ENCODE measurements at regions of chr3 and their contacts with region 1.

Region 1: DNA sequence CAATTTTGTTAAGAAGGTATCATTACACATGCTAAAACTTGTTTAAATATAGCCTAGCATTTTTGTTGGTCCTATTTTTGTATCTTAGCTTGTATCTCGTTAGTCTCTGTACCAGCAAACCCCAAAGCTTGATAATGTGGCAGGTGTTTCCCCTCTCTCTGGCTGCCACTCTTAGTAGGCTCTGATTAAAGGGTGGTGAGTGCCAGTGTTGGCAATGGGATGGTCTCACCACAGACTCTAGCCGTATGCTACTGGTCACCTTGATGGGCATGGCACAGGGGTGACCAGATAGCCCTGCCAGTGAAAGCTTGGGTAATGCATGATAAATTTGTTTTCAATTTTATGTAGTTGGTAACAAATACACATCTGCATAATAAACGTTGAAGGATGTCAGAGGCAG is 188.3 kb downstream of the CFAP20DC start:
- DNase-seq: no peak
- ATAC-seq: peak; percentile 54; the same call in 2 of the 3 replicates
- H3K4me3 ChIP-seq: no peak overlapping the region
- H3K27ac ChIP-seq: no peak overlapping the region
- H3K4me1 ChIP-seq: no peaks in the 10 kb centered on the region
- H3K27me3 ChIP-seq: no peaks in the 10 kb centered on the region
- CTCF ChIP-seq: no peak
- EP300 ChIP-seq: no peak
- POLR2A ChIP-seq: no peak
- RAD21 ChIP-seq: no peak

Region 2: DNA sequence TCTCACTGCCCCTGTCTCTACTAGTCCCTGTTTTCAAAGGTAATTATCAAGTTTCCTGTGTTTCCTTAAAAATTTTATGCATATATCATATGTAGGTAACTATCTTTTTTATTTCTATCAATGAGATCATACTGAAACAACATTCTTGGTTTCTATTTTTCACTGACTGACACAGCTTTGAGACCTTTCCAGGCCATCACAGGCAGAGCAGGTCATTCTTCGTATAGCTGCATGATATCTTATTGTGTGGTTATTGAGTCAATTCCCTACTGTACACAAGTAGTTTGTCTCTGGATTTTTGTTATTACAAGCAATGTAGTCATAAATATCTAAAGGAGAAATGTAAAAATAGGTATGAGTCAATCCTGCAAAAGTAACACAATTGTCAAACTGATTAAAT is 18.6 kb after region 1 on chr3:
- CTCF ChIA-PET with region 1: interaction called, 13 read pairs
- POLR2A ChIA-PET with region 1: interaction called, 3 read pairs
- RAD21 ChIA-PET with region 1: interaction called, 3 read pairs
- SMC1A ChIA-PET with region 1: interaction called, 7 read pairs
- in situ Hi-C with region 1: no loop called
- intact Hi-C with region 1: no loop called
- DNase-seq: no peak
- ATAC-seq: peak; percentile 94
- H3K4me3 ChIP-seq: no peak overlapping the region
- H3K27ac ChIP-seq: no peak overlapping the region
- H3K4me1 ChIP-seq: no peaks in the 10 kb centered on the region
- H3K27me3 ChIP-seq: no peaks in the 10 kb centered on the region
- CTCF ChIP-seq: no peak
- EP300 ChIP-seq: no peak
- POLR2A ChIP-seq: no peak
- RAD21 ChIP-seq: no peak

Region 3: DNA sequence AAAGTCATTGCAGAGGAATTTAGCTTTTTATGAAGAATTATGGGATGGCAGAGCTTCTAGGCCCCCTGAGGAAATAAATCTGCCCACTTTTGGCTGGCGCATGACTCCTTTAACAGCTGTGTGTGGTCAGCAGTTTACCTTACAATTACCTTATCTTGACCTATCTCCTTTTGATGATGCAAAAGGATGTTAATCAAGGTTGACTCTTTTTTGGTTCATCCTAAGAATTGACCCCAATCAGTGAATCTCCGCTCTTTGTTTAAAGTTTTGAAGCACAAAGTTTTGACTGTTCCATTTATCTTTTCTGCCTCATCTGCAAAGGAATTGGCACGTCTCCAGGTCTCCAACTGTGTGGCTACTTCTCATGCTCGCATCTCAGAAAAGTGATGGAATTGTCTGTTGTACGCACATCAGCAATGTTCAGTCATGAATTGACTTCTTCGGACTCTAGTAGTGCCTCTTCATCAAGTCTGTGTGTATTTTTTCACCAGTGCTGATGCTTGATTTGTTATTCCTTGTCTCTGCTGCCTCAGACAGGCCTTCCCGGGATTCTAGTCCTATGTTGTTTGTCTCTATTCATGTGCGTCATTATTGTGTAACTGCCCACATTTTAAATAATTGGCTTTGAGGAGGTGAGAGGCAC is 384.4 kb after region 1 on chr3:
- CTCF ChIA-PET with region 1: no interaction called
- POLR2A ChIA-PET with region 1: no interaction called
- RAD21 ChIA-PET with region 1: no interaction called
- SMC1A ChIA-PET with region 1: no interaction called
- in situ Hi-C with region 1: no loop called
- intact Hi-C with region 1: no loop called
- DNase-seq: no peak
- ATAC-seq: no peak
- H3K4me3 ChIP-seq: no peak overlapping the region
- H3K27ac ChIP-seq: peak overlapping the region; percentile 25; the same call in 1 of the 2 replicates
- H3K4me1 ChIP-seq: peaks cover 18% of the 10 kb centered on the region
- H3K27me3 ChIP-seq: no peaks in the 10 kb centered on the region
- CTCF ChIP-seq: no peak
- EP300 ChIP-seq: no peak
- POLR2A ChIP-seq: no peak
- RAD21 ChIP-seq: no peak